ENCODE measurements at regions of chr22 and their contacts with region 1.

Region 1: DNA sequence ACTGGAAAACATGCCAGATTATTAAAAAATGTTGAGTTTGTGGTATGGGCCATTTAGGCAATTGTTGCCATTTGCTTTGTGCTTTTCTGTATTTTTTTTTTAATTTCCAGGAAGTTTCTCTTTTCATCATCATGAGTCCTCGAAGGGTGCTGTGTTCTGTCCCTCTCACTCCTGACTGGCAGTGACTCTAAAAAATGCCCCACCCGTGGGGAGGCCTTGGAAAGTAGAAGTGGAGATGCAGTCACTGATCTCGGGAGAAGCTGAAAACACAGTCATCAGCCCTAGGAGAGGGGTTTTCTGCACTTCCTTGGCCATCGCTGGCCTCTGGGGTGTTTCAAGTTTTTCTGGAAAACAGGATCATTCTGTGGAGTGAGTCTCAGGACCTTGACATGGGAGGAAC is 98.5 kb upstream of the GRK3 start:
- DNase-seq: no peak
- H3K4me3 ChIP-seq: no peak overlapping the region
- CTCF ChIP-seq: no peak
- POLR2A ChIP-seq: no peak

Region 2: GRCh38 chr22:25702040-25702439 is 236.1 kb after region 1 on chr22:
- intact Hi-C with region 1: loop called (anchors 10 kb)
- DNase-seq: no peak
- H3K4me3 ChIP-seq: no peak overlapping the region
- CTCF ChIP-seq: no peak
- POLR2A ChIP-seq: no peak

Region 3: DNA sequence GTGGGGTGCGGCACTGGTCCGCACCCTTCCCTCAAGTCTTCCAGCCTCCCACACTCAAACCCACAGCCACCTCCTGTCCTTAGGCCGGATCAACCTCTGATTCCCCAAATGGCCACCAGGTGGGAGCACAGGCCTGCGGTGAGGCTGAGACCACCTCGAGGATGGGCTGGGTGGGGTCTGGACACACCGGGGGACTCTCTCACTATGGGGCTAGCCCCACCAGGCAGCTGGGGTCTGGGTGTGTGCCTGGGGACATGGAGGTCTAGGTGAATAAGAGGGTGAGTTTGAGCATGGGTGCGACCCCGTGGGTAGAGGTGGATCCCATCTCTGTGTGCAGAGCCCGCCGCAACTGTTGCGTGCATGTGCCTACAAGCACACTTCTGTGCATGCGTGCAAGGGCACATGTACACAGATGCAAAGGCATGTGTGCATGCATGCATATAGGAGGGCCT is 308.7 kb after region 1 on chr22:
- intact Hi-C with region 1: loop called (anchors 5 kb)
- DNase-seq: no peak
- H3K4me3 ChIP-seq: no peak overlapping the region
- CTCF ChIP-seq: no peak
- POLR2A ChIP-seq: no peak